Body of pancreas (tissue), 4 donors: ENCODE measurements at regions of chr16 and their contacts with region 1.

Region 1: DNA sequence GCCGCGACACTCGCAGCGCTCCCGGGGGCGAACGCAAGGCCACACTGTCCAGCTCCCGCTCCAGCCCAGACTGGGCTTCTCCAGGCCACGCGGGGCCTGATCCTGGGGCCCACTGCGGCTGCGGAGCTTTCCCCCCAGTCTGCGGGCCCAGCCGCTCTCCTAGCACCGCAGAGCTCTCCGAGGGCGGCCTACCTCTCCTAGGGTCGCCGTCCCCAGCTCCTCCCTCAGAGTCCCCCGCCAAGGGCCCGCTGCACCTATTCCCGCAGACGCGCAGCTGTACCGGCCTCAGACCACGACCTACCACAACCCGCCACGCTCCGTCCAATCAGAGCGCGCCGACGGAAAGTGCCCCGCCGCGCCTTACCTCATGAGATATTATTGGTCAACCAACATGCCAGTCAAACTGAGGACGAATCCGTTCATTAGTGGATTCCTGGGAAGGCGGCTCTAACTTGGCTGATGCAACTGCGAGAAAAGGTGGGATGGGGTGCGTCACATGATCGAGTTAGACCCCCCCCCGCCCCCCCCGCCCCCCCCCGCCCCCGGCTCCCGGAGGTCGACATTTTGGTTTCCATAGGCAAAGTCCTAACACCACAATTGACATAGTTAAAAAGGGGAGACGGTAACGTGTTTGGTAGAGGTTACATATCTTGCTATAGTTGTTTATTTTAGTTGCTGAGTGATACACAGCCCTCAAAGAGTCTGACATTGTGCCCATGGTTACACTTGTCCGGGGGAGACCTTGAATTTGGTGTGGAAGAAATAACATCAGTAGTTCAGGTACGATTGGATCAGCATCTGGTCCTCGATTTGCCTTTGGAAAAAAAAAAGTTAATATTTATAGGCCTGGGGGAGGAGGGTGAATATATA is at the start of gene AARS1:
- DNase-seq: peak; percentile 96 to 99 (median 98)
- ATAC-seq: peak; percentile 99
- H3K4me3 ChIP-seq: peak within 1 kb of the TSS; percentile 21 to 70
- H3K27ac ChIP-seq: peak within 1 kb of the TSS; percentile 90 to 99 (median 98)
- H3K4me1 ChIP-seq: peaks cover 17% of the 10 kb centered on the region
- H3K27me3 ChIP-seq: no peaks in the 10 kb centered on the region
- CTCF ChIP-seq: peak in 1 of 7 experiments; percentile 19
- POLR2A ChIP-seq: peak; percentile 98 to 99 (median 98)
- total RNA-seq, gene AARS1: 49.3 to 72.8 TPM

Region 2: GRCh38 chr16:70251629-70252354 is 37.7 kb before region 1 on chr16 and contains the start of gene EXOSC6:
- intact Hi-C with region 1: no loop called
- DNase-seq: peak; percentile 89 to 95 (median 90)
- ATAC-seq: peak; percentile 95
- H3K4me3 ChIP-seq: peak within 1 kb of the TSS in 1 of 2 donors; percentile 62
- H3K27ac ChIP-seq: peak within 1 kb of the TSS; percentile 76 to 93 (median 85)
- H3K4me1 ChIP-seq: peaks cover 19% of the 10 kb centered on the region
- H3K27me3 ChIP-seq: no peaks in the 10 kb centered on the region
- CTCF ChIP-seq: peak; percentile 91 to 98 (median 96)
- POLR2A ChIP-seq: peak; percentile 78 to 90 (median 83)
- total RNA-seq, gene EXOSC6: 19.2 to 21.8 TPM

Region 3: DNA sequence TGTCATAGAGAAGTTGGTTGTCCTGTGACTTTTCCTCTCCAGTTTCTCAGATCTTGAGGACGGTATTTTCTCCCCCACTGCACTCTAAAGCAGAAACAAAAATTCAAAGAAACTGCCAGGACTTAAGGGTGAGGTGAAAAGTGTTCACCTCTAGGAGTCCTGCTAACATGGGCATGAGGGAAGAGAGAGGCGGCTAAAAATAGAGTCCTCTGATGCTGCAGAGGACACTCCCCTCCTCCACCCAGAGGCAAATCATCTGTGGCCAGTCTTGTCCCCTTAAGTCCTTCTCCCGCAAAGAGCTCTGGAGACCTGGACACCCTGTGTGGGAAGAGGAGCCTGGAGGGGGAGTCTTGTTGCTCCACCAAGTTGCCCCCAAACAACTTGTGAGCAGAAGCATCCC is 52.6 kb after region 1 on chr16:
- intact Hi-C with region 1: loop called (anchors 10 kb)
- DNase-seq: no peak
- ATAC-seq: no peak
- H3K4me3 ChIP-seq: no peak overlapping the region
- H3K27ac ChIP-seq: no peak overlapping the region
- H3K4me1 ChIP-seq: peaks cover 10% of the 10 kb centered on the region
- H3K27me3 ChIP-seq: no peaks in the 10 kb centered on the region
- CTCF ChIP-seq: no peak
- POLR2A ChIP-seq: no peak